Esophagus squamous epithelium (tissue), 5 donors: ENCODE measurements at regions of chr6 and their contacts with region 1.

Region 1: GRCh38 chr6:88982720-88983119 is 19.3 kb upstream of the RNGTT start:
- DNase-seq: no peak
- H3K4me3 ChIP-seq: peak overlapping the region in 1 of 4 donors; percentile 34
- H3K27ac ChIP-seq: peak overlapping the region in 1 of 4 donors; percentile 19
- H3K4me1 ChIP-seq: peaks cover 0 to 10% (median 7%) of the 10 kb centered on the region in 3 donors
- H3K27me3 ChIP-seq: no peaks in the 10 kb centered on the region
- CTCF ChIP-seq: peak; percentile 65 to 88 (median 73)
- POLR2A ChIP-seq: no peak

Region 2: GRCh38 chr6:89117211-89118108 is 134.7 kb after region 1 on chr6 and contains the start of gene SRSF12:
- intact Hi-C with region 1: loop called (anchors 10 kb)
- DNase-seq: no peak
- H3K4me3 ChIP-seq: peak within 1 kb of the TSS; percentile 52 to 91 (median 62)
- H3K27ac ChIP-seq: peak within 1 kb of the TSS; percentile 8 to 41 (median 22)
- H3K4me1 ChIP-seq: peaks cover 0 to 23% (median 3%) of the 10 kb centered on the region in 3 donors
- H3K27me3 ChIP-seq: peaks cover 0 to 3% (median 0%) of the 10 kb centered on the region in 4 donors
- CTCF ChIP-seq: no peak
- POLR2A ChIP-seq: no peak
- total RNA-seq, gene SRSF12: 0.19 to 0.44 (median 0.38) TPM

Region 3: DNA sequence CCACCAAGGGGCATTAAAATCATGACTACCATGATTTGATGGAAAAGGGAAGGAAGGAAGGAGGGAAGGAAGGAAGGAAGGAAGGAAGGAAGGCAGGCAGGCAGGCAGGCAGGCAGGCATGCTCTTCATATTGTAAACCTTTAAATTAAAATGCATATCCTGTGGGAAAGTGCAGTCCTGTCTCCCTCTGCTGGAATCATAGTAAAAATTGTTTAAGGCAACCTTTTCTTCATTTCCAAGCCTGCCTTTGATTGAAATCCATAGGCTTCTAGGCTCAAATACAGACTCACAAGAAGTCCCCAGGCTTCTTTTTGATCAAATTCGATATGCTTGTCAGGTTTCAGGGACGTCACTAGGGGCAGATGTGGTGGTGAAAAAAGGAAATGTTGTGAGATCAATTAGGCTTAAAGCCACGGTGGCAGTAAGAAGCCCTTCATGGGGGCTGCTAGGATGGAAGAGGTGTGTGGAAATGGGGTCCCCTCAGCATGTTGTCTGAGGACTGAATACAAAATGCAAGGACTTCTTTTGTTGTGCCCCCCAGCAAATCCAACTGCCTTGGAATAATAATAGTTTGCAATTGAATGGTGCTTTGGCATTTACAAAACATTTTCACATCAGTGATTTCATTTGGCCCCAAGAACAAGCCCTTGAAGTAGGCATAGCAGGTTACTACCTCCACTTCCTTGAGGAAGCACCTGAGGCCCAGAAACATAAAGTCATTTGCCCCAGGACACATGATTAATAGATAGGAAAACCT is 260.0 kb after region 1 on chr6:
- intact Hi-C with region 1: loop called (anchors 5 kb)
- DNase-seq: no peak
- H3K4me3 ChIP-seq: no peak overlapping the region
- H3K27ac ChIP-seq: no peak overlapping the region
- H3K4me1 ChIP-seq: peaks cover 0 to 9% (median 0%) of the 10 kb centered on the region in 3 donors
- H3K27me3 ChIP-seq: no peaks in the 10 kb centered on the region
- CTCF ChIP-seq: peak in 5 of 6 experiments; percentile 39 to 69 (median 53)
- POLR2A ChIP-seq: no peak

Region 4: DNA sequence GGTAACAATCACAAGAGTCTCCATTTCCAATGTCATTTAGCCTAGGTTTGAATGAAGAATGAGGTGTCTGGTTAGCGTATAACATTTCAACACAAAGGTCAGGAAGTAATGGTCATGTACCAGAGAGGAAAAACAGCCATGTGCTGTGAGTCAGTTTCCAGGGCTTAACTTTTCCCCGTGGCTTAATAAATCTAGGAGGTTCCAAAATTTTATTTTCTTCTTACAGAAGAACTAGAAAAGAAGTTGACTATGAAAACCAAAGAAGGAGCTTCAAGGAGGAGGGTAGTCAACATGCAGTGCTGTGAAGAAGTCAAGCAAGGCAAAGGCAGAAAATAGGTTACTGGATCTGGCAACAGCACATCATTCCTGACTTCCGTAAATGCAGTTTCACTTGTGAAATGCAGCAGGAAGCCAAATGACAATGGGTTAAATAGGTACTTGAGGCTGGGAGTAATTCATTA is 340.8 kb after region 1 on chr6:
- intact Hi-C with region 1: no loop called
- DNase-seq: no peak
- H3K4me3 ChIP-seq: no peak overlapping the region
- H3K27ac ChIP-seq: peak overlapping the region in 1 of 4 donors; percentile 37
- H3K4me1 ChIP-seq: no peaks in the 10 kb centered on the region
- H3K27me3 ChIP-seq: no peaks in the 10 kb centered on the region
- CTCF ChIP-seq: no peak
- POLR2A ChIP-seq: no peak